Activated naive CD4-positive, alpha-beta T cell treated with anti-CD3 and anti-CD28 coated beads, Interleukin-2, amount 10 ng/mL, durations not matched to agents 7 days and 5 days (primary cell): ENCODE measurements at regions of chr12 and their contacts with region 1.

Region 1: GRCh38 chr12:69157023-69157655 is 82.2 kb upstream of the CPSF6 start:
- DNase-seq: peak; percentile 93
- H3K4me3 Mint-ChIP-seq: no peak overlapping the region
- H3K27ac Mint-ChIP-seq: no peak overlapping the region
- H3K4me1 Mint-ChIP-seq: peaks cover 36% of the 10 kb centered on the region
- H3K27me3 Mint-ChIP-seq: no peaks in the 10 kb centered on the region

Region 2: GRCh38 chr12:69123919-69124638 is 33.1 kb before region 1 on chr12:
- CTCF ChIA-PET with region 1: no interaction called
- DNase-seq: no peak
- H3K4me3 Mint-ChIP-seq: no peak overlapping the region
- H3K27ac Mint-ChIP-seq: no peak overlapping the region
- H3K4me1 Mint-ChIP-seq: no peaks in the 10 kb centered on the region
- H3K27me3 Mint-ChIP-seq: peaks cover 4% of the 10 kb centered on the region

Region 3: GRCh38 chr12:69170293-69170692 is 13.2 kb after region 1 on chr12:
- CTCF ChIA-PET with region 1: interaction called, 12 read pairs
- DNase-seq: no peak
- H3K4me3 Mint-ChIP-seq: no peak overlapping the region
- H3K27ac Mint-ChIP-seq: no peak overlapping the region
- H3K4me1 Mint-ChIP-seq: no peaks in the 10 kb centered on the region
- H3K27me3 Mint-ChIP-seq: no peaks in the 10 kb centered on the region

Region 4: DNA sequence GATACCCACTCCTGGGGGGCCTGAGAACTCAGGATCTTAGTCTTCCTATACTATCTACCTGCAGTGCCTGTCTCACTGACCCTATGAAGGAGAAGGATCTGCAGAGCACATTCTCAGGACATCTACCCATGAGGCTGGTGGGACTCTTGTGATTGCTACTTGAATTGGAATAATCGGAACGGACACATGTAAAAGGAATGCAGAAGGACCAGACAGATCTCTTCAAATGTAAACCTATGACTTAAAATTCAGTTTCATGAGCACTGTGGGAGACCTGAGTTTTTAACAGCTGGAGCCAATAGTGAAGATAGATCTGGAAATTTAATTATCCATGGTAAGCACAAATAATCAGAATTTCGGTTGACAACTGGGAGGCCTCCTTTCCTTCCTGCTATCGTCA is 47.1 kb after region 1 on chr12:
- CTCF ChIA-PET with region 1: no interaction called
- DNase-seq: no peak
- H3K4me3 Mint-ChIP-seq: no peak overlapping the region
- H3K27ac Mint-ChIP-seq: no peak overlapping the region
- H3K4me1 Mint-ChIP-seq: no peaks in the 10 kb centered on the region
- H3K27me3 Mint-ChIP-seq: no peaks in the 10 kb centered on the region

Region 5: DNA sequence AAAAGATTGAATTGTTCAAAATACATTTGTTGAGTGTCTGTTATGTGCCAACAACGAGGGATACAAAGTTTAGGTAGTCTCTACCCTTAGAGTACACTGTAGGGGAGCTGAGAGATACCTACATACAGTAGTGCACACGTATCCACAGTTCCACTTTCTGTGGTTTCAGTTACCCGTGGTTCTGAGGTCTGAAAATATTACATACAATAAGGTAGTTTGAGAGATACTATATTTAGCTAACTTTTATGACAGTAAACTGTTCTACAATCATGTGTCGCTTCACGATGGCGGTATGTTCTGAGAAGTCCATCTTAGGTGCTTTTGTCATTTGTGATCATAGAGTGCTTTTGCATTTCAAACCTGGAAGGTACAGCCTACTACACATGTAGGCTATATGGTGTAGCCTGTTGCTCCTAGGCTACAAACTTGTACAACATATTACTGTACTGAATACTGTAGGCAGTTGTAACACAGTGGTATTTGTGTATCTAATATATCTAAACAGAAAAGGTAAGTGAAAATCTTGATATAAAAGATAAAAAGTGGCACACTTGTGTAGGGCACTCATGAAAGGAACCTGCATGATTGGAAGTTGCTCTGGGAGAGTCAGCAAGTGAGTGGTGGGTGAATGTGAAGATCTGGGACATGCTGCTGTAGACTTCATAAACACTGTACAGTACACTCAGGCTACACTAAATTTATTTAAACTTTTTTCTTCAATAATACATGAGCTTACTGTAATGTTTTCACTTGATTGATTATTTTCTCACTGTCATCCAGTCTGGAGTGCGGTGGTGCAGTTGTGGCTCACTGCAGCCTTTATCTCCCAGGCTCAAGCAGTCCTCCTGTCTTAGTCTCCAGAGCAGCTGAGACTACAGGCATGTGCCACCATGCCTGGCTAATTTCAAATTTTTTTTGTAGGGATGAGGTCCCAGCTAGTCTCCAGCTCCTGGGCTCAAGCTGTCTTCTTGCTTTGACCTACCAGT is 86.3 kb after region 1 on chr12:
- CTCF ChIA-PET with region 1: interaction called, 19 read pairs
- DNase-seq: no peak
- H3K4me3 Mint-ChIP-seq: peak overlapping the region; percentile 39
- H3K27ac Mint-ChIP-seq: peak overlapping the region; percentile 45
- H3K4me1 Mint-ChIP-seq: peaks cover 66% of the 10 kb centered on the region
- H3K27me3 Mint-ChIP-seq: no peaks in the 10 kb centered on the region

Region 6: DNA sequence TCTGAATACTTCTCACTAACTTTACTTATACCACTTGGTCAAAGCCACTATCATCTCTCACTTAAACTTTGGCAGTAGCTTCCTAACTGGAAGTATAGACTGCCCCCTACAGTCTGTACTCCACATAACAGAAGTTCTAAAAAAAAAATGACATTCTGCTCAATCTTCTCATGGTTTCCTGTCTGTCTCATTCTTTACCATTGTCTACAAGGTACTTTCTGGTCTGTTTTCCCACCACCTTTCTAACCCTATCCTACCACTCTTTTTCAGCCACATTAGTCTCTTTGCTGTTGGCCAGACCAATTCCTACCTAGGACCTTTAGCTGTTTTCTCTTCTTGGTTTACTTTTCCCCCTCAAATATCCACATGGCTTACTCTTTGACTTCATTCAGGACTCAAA is 96.9 kb after region 1 on chr12:
- CTCF ChIA-PET with region 1: interaction called, 94 read pairs
- DNase-seq: no peak
- H3K4me3 Mint-ChIP-seq: no peak overlapping the region
- H3K27ac Mint-ChIP-seq: peak overlapping the region; percentile 2
- H3K4me1 Mint-ChIP-seq: peaks cover 26% of the 10 kb centered on the region
- H3K27me3 Mint-ChIP-seq: no peaks in the 10 kb centered on the region

Region 7: GRCh38 chr12:69341328-69341727 is 184.2 kb after region 1 on chr12:
- CTCF ChIA-PET with region 1: no interaction called
- DNase-seq: no peak
- H3K4me3 Mint-ChIP-seq: no peak overlapping the region
- H3K27ac Mint-ChIP-seq: no peak overlapping the region
- H3K4me1 Mint-ChIP-seq: no peaks in the 10 kb centered on the region
- H3K27me3 Mint-ChIP-seq: peaks cover 28% of the 10 kb centered on the region

Region 8: GRCh38 chr12:69639400-69640016 is 482.4 kb after region 1 on chr12:
- CTCF ChIA-PET with region 1: interaction called, 15 read pairs
- DNase-seq: peak; percentile 70
- H3K4me3 Mint-ChIP-seq: no peak overlapping the region
- H3K27ac Mint-ChIP-seq: no peak overlapping the region
- H3K4me1 Mint-ChIP-seq: no peaks in the 10 kb centered on the region
- H3K27me3 Mint-ChIP-seq: peaks cover 3% of the 10 kb centered on the region

Region 9: DNA sequence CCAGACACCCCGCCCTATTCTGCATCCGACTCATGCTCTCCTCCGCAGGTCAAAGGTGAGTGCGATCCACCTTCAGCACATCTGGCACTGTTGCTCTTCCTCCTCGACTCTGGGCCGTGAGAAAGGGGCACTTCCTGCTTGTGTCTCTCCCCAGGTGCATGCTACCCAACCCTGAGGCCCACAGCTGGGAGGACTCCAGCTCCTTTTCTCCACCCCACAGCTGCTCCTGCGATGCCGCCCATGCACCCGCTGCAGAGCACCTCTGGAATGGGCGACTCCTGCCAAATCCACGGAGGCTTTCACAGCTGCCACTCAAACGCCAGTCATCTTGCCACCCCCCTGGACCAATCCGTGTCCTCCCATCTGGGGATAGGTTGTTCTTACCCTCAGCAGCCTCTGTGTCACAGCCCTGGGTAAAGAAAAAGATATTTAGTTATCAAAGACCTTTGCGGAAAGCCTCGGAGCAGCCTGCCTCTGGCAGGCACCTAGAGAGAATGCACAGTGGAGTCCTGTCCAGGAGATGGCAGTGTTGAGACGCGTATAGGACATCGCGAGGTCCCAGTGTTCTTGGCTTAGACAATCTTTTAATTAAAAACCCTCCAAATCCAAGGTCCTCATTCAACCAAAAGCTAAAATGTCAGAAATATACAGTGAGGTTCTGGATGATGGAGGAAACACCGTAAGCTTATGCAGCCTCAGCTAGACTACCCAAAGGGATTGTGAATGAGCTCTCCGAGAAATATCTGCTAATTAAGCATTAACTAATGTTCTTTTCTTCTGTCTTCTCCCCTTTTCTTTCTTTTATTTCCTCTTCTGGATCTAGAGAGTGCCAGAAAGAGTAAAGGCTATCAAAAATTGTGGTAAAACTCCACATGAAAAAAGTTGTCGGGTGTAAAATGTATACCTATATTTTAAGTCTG is 722.2 kb after region 1 on chr12:
- CTCF ChIA-PET with region 1: no interaction called
- DNase-seq: peak; percentile 75
- H3K4me3 Mint-ChIP-seq: no peak overlapping the region
- H3K27ac Mint-ChIP-seq: no peak overlapping the region
- H3K4me1 Mint-ChIP-seq: peaks cover 4% of the 10 kb centered on the region
- H3K27me3 Mint-ChIP-seq: peaks cover 9% of the 10 kb centered on the region